Heart right ventricle (tissue), 16 donors: ENCODE measurements at regions of chr11 and their contacts with region 1.

Region 1: GRCh38 chr11:12599408-12600143 is 74.6 kb upstream of the TEAD1 start:
- DNase-seq: peak; percentile 22 to 57
- ATAC-seq: peak in 7 of 8 donors; percentile 41 to 72 (median 52)
- H3K4me3 ChIP-seq: no peak overlapping the region
- H3K27ac ChIP-seq: no peak overlapping the region
- H3K4me1 ChIP-seq: peaks cover 0 to 36% (median 13%) of the 10 kb centered on the region in 9 donors
- H3K27me3 ChIP-seq: no peaks in the 10 kb centered on the region
- CTCF ChIP-seq: peak; percentile 46 to 78 (median 68)

Region 2: GRCh38 chr11:10716127-10716526 is 1883.4 kb before region 1 on chr11:
- intact Hi-C with region 1: no loop called
- DNase-seq: no peak
- ATAC-seq: no peak
- H3K4me3 ChIP-seq: no peak overlapping the region
- H3K27ac ChIP-seq: no peak overlapping the region
- H3K4me1 ChIP-seq: no peaks in the 10 kb centered on the region
- H3K27me3 ChIP-seq: no peaks in the 10 kb centered on the region
- CTCF ChIP-seq: no peak

Region 3: GRCh38 chr11:12235947-12236743 is 363.4 kb before region 1 on chr11:
- intact Hi-C with region 1: no loop called
- DNase-seq: no peak
- ATAC-seq: peak; percentile 10 to 67 (median 50)
- H3K4me3 ChIP-seq: no peak overlapping the region
- H3K27ac ChIP-seq: peak overlapping the region in 8 of 10 donors; percentile 24 to 74 (median 50)
- H3K4me1 ChIP-seq: peaks cover 6 to 77% (median 44%) of the 10 kb centered on the region in 9 donors
- H3K27me3 ChIP-seq: no peaks in the 10 kb centered on the region
- CTCF ChIP-seq: peak; percentile 48 to 81 (median 75)

Region 4: DNA sequence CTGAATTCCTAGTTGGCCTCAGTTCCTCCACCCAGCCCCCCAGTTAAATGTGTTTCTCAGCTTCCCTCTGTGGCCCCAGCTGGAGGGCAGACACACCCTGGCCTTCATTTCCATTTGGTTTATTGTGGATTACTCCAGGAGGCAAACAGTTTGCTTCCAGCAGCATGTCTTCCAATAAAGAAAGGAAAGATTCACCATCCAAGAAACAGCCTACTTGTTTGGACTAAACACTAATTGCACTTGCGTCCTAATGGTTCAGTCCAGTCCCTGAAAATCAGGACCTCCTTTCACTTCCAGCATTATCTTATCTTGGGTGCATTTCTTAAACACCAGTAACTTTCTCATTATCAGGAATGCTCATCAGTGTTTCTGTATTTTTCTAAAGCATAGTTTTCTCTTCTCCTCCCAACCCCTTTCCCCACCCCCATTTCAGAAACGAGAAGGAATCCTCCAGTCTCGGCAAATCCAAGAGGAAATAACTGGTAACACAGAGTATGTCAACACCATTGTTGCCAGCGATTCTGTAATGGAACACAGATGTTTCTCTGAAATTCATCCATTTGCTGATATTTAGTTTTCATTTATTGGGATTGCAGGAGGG is 91.3 kb before region 1 on chr11:
- intact Hi-C with region 1: loop called in 1 of 10 experiments (anchors 5 kb)
- DNase-seq: peak in 1 of 2 donors; percentile 34
- ATAC-seq: peak in 7 of 8 donors; percentile 53 to 79 (median 74)
- H3K4me3 ChIP-seq: no peak overlapping the region
- H3K27ac ChIP-seq: peak overlapping the region in 4 of 10 donors; percentile 18 to 51 (median 40)
- H3K4me1 ChIP-seq: peaks cover 0 to 37% (median 5%) of the 10 kb centered on the region in 9 donors
- H3K27me3 ChIP-seq: no peaks in the 10 kb centered on the region
- CTCF ChIP-seq: no peak

Region 5: DNA sequence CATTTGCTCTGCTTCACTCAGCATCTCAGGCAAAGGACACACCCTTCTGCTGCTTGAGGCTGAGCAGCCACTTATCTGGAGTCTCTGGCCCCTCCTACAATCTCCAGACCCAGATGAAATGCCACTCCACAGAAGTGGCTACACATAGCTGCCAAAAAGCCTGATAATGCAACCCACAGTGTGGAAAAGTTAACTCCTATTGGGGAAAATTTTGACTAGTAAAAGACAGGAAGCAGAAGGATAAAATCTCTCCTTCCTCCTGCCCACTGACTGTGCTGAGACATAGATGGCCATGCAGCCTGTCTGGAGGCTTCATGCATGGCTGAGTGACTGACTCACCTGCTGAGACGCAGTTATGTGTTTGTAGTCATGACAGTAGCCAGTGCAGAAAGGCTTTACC is 17.7 kb before region 1 on chr11:
- intact Hi-C with region 1: no loop called
- DNase-seq: no peak
- ATAC-seq: peak in 3 of 8 donors; percentile 53 to 59 (median 55)
- H3K4me3 ChIP-seq: no peak overlapping the region
- H3K27ac ChIP-seq: no peak overlapping the region
- H3K4me1 ChIP-seq: peaks cover 0 to 26% (median 15%) of the 10 kb centered on the region in 9 donors
- H3K27me3 ChIP-seq: no peaks in the 10 kb centered on the region
- CTCF ChIP-seq: no peak